ENCODE measurements at regions of chr3 and their contacts with region 1.

Region 1: GRCh38 chr3:186783073-186783730 is at the start of gene EIF4A2:
- DNase-seq: peak; percentile 92
- H3K4me3 ChIP-seq: peak within 1 kb of the TSS; percentile 57 to 87 (median 80)
- H3K27ac ChIP-seq: peak within 1 kb of the TSS; percentile 95 to 99 (median 99)
- H3K4me1 ChIP-seq: peaks cover 14 to 43% (median 30%) of the 10 kb centered on the region in 4 donors
- H3K27me3 ChIP-seq: no peaks in the 10 kb centered on the region
- CTCF ChIP-seq: peak in 1 of 5 experiments; percentile 11
- EP300 ChIP-seq: peak; percentile 1
- POLR2A ChIP-seq: peak; percentile 100
- total RNA-seq, gene EIF4A2: 146 to 550 (median 353) TPM

Region 2: GRCh38 chr3:185561374-185561943 is 1221.7 kb before region 1 on chr3:
- in situ Hi-C with region 1: no loop called
- intact Hi-C with region 1: no loop called
- DNase-seq: peak; percentile 58
- H3K4me3 ChIP-seq: no peak overlapping the region
- H3K27ac ChIP-seq: peak overlapping the region; percentile 47 to 82 (median 60)
- H3K4me1 ChIP-seq: peaks cover 0 to 41% (median 11%) of the 10 kb centered on the region in 4 donors
- H3K27me3 ChIP-seq: no peaks in the 10 kb centered on the region
- CTCF ChIP-seq: no peak
- EP300 ChIP-seq: no peak
- POLR2A ChIP-seq: peak; percentile 26

Region 3: GRCh38 chr3:185929192-185930151 is 853.7 kb before region 1 on chr3:
- in situ Hi-C with region 1: loop called in 1 of 4 experiments (anchors 10 kb)
- intact Hi-C with region 1: no loop called
- DNase-seq: no peak
- H3K4me3 ChIP-seq: peak overlapping the region in 1 of 4 donors; percentile 22
- H3K27ac ChIP-seq: peak overlapping the region; percentile 38 to 74 (median 54)
- H3K4me1 ChIP-seq: peaks cover 70 to 99% (median 82%) of the 10 kb centered on the region in 4 donors
- H3K27me3 ChIP-seq: no peaks in the 10 kb centered on the region
- CTCF ChIP-seq: no peak
- EP300 ChIP-seq: no peak
- POLR2A ChIP-seq: no peak

Region 4: GRCh38 chr3:186108941-186109865 is 674.0 kb before region 1 on chr3 and contains the start of gene ETV5:
- in situ Hi-C with region 1: loop called in 1 of 4 experiments (anchors 25 kb)
- intact Hi-C with region 1: no loop called
- DNase-seq: peak; percentile 98
- H3K4me3 ChIP-seq: peak within 1 kb of the TSS; percentile 41 to 76 (median 69)
- H3K27ac ChIP-seq: peak within 1 kb of the TSS; percentile 78 to 88 (median 82)
- H3K4me1 ChIP-seq: peaks cover 4 to 47% (median 28%) of the 10 kb centered on the region in 4 donors
- H3K27me3 ChIP-seq: peaks cover 78% of the 10 kb centered on the region
- CTCF ChIP-seq: peak in 1 of 5 experiments; percentile 16
- EP300 ChIP-seq: no peak
- POLR2A ChIP-seq: peak; percentile 38
- total RNA-seq, gene ETV5: 1.9 to 12.2 (median 4.0) TPM in 3 of 4 donors, not detected in the other

Region 5: GRCh38 chr3:186287711-186288110 is 495.5 kb before region 1 on chr3:
- in situ Hi-C with region 1: no loop called
- intact Hi-C with region 1: no loop called
- DNase-seq: no peak
- H3K4me3 ChIP-seq: no peak overlapping the region
- H3K27ac ChIP-seq: peak overlapping the region in 1 of 4 donors; percentile 31
- H3K4me1 ChIP-seq: peaks cover 0 to 10% (median 3%) of the 10 kb centered on the region in 4 donors
- H3K27me3 ChIP-seq: no peaks in the 10 kb centered on the region
- CTCF ChIP-seq: no peak
- EP300 ChIP-seq: no peak
- POLR2A ChIP-seq: no peak

Region 6: DNA sequence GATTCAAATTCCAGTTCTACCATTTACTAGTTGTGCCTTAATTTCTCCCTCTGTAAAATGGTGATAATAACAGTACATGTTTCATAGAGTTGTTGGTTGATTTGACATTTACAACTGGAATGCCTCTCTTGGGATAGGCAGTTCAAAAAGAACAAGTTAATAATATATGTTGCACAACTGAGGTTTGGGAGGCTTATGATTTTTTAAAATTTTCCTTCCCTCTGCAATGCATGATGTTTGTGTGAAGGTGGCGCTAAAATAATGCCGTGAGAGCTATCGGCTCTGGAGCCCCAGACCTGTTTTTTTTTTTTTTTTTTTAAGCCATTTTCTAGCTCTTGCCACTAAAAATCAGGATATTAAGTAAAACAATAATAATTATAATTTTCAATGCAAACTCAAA is 194.1 kb before region 1 on chr3:
- in situ Hi-C with region 1: no loop called
- intact Hi-C with region 1: no loop called
- DNase-seq: no peak
- H3K4me3 ChIP-seq: no peak overlapping the region
- H3K27ac ChIP-seq: no peak overlapping the region
- H3K4me1 ChIP-seq: no peaks in the 10 kb centered on the region
- H3K27me3 ChIP-seq: no peaks in the 10 kb centered on the region
- CTCF ChIP-seq: peak in 1 of 5 experiments; percentile 4
- EP300 ChIP-seq: no peak
- POLR2A ChIP-seq: no peak